ENCODE measurements at regions of chr17 and their contacts with region 1.

Region 1: DNA sequence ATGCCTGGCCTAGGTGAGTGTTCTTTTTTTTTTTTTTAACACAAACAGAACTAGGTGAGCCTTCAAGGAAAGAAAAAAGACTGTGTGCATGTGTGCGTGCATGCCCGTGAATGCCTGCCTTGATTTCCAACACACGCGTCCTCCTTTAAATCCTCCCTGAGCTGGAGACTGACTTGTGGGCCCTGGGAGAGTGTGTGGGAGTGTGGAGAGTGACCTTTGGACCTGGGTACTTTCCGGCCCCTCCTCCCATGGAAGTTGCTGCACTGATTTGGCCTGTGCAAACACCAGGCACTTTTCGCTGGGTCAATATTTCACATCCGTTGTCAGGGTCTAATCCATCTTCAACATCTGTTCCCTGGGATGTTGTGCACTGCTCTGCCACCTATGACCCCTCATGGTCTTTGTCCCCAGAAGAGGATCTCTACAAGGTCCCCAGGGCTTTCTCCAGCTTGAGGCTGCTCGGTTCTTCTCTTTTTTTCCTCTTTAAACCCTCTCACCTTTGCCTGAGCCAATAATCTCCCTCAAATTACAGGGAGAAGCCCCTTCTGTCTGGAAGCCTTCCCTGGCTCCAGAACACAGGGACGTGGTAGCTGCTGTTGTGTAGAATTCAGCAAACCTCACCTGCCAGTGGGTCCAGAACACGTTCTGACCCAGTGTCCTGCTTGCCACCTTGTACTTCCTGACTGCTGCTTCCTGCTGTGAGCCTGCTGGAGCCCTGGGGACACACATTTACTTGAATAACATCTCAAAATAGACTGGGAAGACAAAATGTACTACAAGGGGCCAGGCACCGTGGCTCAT is 20.8 kb upstream of the ATP5MC1 start:
- DNase-seq: peak; percentile 33 to 52
- ATAC-seq: peak; percentile 53 to 80 (median 72)
- H3K4me3 ChIP-seq: no peak overlapping the region
- H3K27ac ChIP-seq: peak overlapping the region; percentile 32 to 82 (median 75)
- H3K4me1 ChIP-seq: peaks cover 3 to 51% (median 38%) of the 10 kb centered on the region in 9 donors
- H3K27me3 ChIP-seq: no peaks in the 10 kb centered on the region
- CTCF ChIP-seq: no peak

Region 2: GRCh38 chr17:48816774-48817590 is 54.8 kb before region 1 on chr17 and contains the start of gene TTLL6:
- intact Hi-C with region 1: loop called in 2 of 10 experiments (anchors 5 kb)
- DNase-seq: peak; percentile 84 to 85
- ATAC-seq: peak; percentile 98 to 100 (median 98)
- H3K4me3 ChIP-seq: peak within 1 kb of the TSS in 9 of 10 donors; percentile 37 to 58 (median 49)
- H3K27ac ChIP-seq: no peak within 1 kb of the TSS
- H3K4me1 ChIP-seq: peaks cover 0 to 17% (median 11%) of the 10 kb centered on the region in 9 donors
- H3K27me3 ChIP-seq: peaks cover 0 to 67% (median 6%) of the 10 kb centered on the region in 7 donors
- CTCF ChIP-seq: no peak
- total RNA-seq, gene TTLL6: 0.08 to 0.33 TPM in 2 of 10 donors, not detected in the others

Region 3: DNA sequence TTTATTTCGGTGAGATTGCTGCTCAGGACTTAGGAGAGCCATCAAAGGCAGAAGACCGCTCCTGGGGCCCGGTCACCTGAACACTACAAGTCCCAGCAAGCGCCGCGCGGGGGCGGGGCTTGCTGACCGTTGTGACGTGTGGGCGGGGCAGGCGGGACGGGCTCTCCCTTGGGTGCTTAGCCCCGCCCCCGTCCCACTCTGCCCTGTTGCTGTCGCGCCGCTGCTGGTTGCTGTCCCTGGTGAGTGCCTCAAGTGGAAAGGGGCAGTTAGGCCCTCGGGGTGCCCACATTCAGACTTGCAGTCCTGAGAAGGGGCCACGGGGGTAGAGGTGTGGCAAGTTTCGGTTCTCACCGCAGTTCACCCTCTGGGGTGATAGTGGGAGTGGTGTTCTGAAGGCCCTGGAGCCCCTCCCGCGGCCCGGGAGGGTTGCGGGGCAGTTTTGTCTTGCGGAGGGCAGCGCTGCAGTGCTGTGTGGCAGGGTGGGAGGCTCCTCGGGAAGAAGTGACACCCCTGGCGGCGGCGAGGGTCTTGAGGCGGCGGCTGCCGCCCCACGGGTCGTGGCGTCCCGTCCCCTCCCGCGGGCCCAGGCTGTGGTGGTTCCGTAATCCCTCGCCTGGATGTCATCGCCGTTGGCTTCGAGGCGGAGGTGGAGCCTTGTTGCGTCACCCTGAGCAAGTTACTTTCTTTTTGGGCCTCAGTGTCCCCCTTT is 40.8 kb before region 1 on chr17 and contains the start of gene CALCOCO2:
- intact Hi-C with region 1: loop called in 3 of 10 experiments (anchors 5 kb)
- DNase-seq: peak; percentile 94
- ATAC-seq: peak; percentile 95 to 99 (median 97)
- H3K4me3 ChIP-seq: peak within 1 kb of the TSS; percentile 50 to 97 (median 74)
- H3K27ac ChIP-seq: peak within 1 kb of the TSS; percentile 93 to 100 (median 96)
- H3K4me1 ChIP-seq: peaks cover 19 to 50% (median 45%) of the 10 kb centered on the region in 9 donors
- H3K27me3 ChIP-seq: no peaks in the 10 kb centered on the region
- CTCF ChIP-seq: peak in 1 of 9 donors; percentile 21
- total RNA-seq, gene CALCOCO2: 196 to 412 (median 275) TPM

Region 4: DNA sequence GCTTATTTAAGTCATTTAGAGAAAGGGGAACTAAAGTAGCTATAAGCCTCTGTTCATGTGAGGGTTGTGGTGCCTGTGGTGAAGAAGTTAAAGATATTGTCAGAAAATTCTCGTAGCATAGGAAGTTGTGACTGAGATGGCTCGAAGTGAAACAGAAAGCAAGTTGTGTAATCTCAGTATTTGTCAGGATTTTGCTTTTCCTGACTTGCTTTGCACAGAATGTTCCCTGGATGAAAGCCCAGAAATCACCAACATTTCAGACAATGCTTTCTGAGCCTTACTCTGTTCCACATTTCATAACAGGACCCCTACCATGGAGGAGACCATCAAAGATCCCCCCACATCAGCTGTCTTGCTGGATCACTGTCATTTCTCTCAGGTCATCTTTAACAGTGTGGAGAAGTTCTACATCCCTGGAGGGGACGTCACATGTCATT is 30.3 kb before region 1 on chr17:
- intact Hi-C with region 1: loop called in 2 of 10 experiments (anchors 2 to 5 kb)
- DNase-seq: peak in 1 of 2 donors; percentile 54
- ATAC-seq: peak; percentile 36 to 87 (median 82)
- H3K4me3 ChIP-seq: peak overlapping the region in 9 of 10 donors; percentile 18 to 52 (median 40)
- H3K27ac ChIP-seq: peak overlapping the region; percentile 83 to 96 (median 87)
- H3K4me1 ChIP-seq: peaks cover 20 to 83% (median 74%) of the 10 kb centered on the region in 9 donors
- H3K27me3 ChIP-seq: no peaks in the 10 kb centered on the region
- CTCF ChIP-seq: no peak

Region 5: DNA sequence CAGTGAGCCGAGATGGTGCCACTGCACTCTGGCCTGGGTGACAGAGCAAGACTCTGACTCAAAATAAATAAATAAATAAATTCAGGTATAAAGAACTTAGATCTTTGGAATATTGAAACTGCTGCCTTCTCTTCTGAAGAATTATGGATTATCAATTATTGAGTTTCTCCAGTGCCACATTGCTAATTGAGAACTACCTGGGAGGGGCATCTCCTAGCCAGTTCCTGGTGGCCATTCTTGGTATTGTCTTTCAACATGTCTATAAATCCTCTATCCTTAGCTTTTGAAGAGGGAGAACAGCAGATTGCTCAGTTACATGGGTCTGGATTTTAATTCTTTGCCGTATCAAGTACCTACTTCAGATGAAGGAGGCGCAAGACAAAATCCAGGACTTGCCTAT is 11.7 kb before region 1 on chr17:
- intact Hi-C with region 1: no loop called
- DNase-seq: no peak
- ATAC-seq: no peak
- H3K4me3 ChIP-seq: no peak overlapping the region
- H3K27ac ChIP-seq: no peak overlapping the region
- H3K4me1 ChIP-seq: no peaks in the 10 kb centered on the region
- H3K27me3 ChIP-seq: no peaks in the 10 kb centered on the region
- CTCF ChIP-seq: peak in 2 of 9 donors; percentile 7 to 24

Region 6: DNA sequence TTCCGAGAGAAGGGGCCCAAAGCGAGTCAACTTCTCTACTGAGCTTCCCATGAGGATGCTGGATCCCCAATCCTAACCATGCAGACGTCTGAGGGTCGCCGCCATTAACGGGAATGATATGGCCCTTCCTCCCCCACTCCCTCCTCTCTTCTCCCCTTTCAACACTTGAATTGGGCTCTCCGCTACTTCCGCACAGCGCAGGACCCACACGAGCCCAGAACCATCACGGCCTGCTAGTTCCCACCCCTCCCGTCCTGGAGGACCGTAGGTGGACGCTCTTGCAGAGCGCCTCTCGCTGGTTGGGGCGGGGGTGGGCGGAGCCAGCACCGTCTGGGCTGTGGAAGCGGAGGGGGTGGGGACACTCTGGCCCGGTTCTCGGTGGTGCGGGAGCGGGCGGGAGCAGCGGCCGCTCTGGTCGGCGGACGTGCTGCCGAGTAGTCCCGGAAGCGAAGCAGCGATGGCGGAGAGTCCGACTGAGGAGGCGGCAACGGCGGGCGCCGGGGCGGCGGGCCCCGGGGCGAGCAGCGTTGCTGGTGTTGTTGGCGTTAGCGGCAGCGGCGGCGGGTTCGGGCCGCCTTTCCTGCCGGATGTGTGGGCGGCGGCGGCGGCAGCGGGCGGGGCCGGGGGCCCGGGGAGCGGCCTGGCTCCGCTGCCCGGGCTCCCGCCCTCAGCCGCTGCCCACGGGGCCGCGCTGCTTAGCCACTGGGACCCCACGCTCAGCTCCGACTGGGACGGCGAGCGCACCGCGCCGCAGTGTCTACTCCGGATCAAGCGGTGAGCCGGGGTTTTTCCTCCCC is 36.5 kb after region 1 on chr17 and contains the start of gene UBE2Z:
- intact Hi-C with region 1: no loop called
- DNase-seq: peak; percentile 92 to 95
- ATAC-seq: peak; percentile 97 to 99 (median 98)
- H3K4me3 ChIP-seq: peak within 1 kb of the TSS; percentile 59 to 99 (median 83)
- H3K27ac ChIP-seq: peak within 1 kb of the TSS; percentile 82 to 97 (median 93)
- H3K4me1 ChIP-seq: peaks cover 0 to 47% (median 33%) of the 10 kb centered on the region in 9 donors
- H3K27me3 ChIP-seq: no peaks in the 10 kb centered on the region
- CTCF ChIP-seq: peak in 5 of 9 donors; percentile 19 to 58 (median 35)
- total RNA-seq, gene UBE2Z: 31.4 to 47.5 (median 38.8) TPM

Measured in heart right ventricle (tissue), 16 donors.